HepG2 (cell line): ENCODE measurements at regions of chr3 and their contacts with region 1.

Region 1: GRCh38 chr3:172530566-172530965 is 7.3 kb upstream of the TNFSF10 start:
- DNase-seq: no peak
- ATAC-seq: peak; percentile 91
- H3K4me3 ChIP-seq: no peak overlapping the region
- H3K27ac ChIP-seq: no peak overlapping the region
- H3K4me1 ChIP-seq: peaks cover 9% of the 10 kb centered on the region; the same call in 1 of the 2 replicates
- H3K27me3 ChIP-seq: no peaks in the 10 kb centered on the region
- CTCF ChIP-seq: no peak
- EP300 ChIP-seq: no peak
- POLR2A ChIP-seq: no peak
- RAD21 ChIP-seq: no peak

Region 2: DNA sequence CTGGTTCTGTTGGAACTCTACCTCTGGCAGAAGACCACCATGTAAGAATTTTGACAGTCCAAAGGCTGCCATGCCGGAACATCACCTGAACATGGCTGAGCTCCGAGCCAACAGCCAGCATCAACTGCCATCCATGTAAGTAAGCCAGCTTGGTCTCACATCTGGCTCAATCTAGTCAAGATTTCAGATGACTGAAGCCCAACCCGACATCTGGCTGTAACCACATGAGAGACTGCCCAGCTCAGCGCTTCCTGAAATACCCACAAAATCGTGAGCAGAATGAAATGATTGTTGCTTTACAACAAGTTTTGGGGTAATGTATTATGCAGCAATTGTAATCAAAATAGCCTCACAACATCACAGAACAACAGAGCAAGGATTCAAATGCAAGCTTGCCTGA is 115.2 kb before region 1 on chr3:
- CTCF ChIA-PET with region 1: no interaction called
- POLR2A ChIA-PET with region 1: no interaction called
- in situ Hi-C with region 1: no loop called
- intact Hi-C with region 1: loop called (anchors 1 kb)
- DNase-seq: no peak
- ATAC-seq: no peak
- H3K4me3 ChIP-seq: no peak overlapping the region
- H3K27ac ChIP-seq: no peak overlapping the region
- H3K4me1 ChIP-seq: no peaks in the 10 kb centered on the region
- H3K27me3 ChIP-seq: no peaks in the 10 kb centered on the region; a peak in 1 of 5 replicates
- CTCF ChIP-seq: no peak
- EP300 ChIP-seq: no peak
- POLR2A ChIP-seq: no peak
- RAD21 ChIP-seq: no peak

Region 3: DNA sequence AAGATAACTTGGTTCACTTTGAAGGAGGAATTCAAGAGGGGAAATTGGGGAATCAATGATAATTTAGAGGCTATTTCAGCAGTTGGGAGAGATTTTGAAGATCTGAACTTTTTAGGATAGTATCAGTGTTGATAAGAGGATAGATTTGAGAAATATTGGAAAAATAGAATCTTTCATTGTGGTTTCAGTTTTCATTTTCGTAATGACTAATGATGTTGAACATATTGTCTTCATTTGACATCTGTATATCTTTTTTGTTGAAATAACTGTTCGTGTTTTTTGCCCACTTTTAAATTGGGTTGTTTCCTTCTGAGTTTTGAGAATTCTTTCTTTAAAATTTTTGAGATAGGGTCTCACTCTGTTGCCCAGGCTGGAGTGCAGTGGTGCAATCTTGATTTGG is 241.1 kb after region 1 on chr3:
- CTCF ChIA-PET with region 1: no interaction called
- POLR2A ChIA-PET with region 1: no interaction called
- in situ Hi-C with region 1: no loop called
- intact Hi-C with region 1: no loop called
- DNase-seq: no peak
- ATAC-seq: no peak
- H3K4me3 ChIP-seq: no peak overlapping the region
- H3K27ac ChIP-seq: no peak overlapping the region
- H3K4me1 ChIP-seq: no peaks in the 10 kb centered on the region
- H3K27me3 ChIP-seq: no peaks in the 10 kb centered on the region
- CTCF ChIP-seq: no peak
- EP300 ChIP-seq: no peak
- POLR2A ChIP-seq: no peak
- RAD21 ChIP-seq: no peak